Mammary epithelial cell (primary cell): ENCODE measurements at regions of chr3 and their contacts with region 1.

Region 1: GRCh38 chr3:197501879-197502620 is 53.7 kb downstream of the BDH1 start:
- DNase-seq: peak; percentile 89
- H3K4me3 ChIP-seq: peak overlapping the region in 1 of 3 experiments; percentile 7
- H3K27ac ChIP-seq: peak overlapping the region; percentile 60
- H3K4me1 ChIP-seq: peaks cover 30% of the 10 kb centered on the region
- H3K27me3 ChIP-seq: no peaks in the 10 kb centered on the region
- CTCF ChIP-seq: peak; percentile 89 to 91

Region 2: DNA sequence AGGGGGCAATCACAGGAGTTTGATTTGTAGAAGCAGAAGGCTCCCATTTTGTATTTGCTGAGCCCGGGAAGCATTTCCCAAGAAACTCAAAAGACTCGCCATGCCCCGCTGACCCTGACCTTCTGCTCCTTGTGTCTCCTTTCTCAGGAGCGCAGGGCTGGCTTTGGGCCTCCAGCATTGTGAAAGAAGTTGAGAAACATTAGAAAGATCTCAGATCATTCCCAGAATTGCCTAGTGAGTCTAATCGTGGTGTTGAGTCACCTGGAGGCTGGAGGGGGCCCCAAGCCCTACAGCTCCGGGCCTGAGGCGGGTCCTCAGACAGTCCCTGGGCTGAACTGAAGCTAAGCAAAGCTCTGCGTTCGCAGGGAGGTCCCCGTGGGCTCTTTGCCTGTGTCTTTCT is 522.5 kb before region 1 on chr3:
- CTCF ChIA-PET with region 1: no interaction called
- dilution Hi-C with region 1: no loop called
- in situ Hi-C with region 1: loop called (anchors 10 to 25 kb)
- intact Hi-C with region 1: loop called (anchors 5 kb)
- DNase-seq: no peak
- H3K4me3 ChIP-seq: no peak overlapping the region
- H3K27ac ChIP-seq: no peak overlapping the region
- H3K4me1 ChIP-seq: peaks cover 4% of the 10 kb centered on the region
- H3K27me3 ChIP-seq: no peaks in the 10 kb centered on the region
- CTCF ChIP-seq: no peak

Region 3: DNA sequence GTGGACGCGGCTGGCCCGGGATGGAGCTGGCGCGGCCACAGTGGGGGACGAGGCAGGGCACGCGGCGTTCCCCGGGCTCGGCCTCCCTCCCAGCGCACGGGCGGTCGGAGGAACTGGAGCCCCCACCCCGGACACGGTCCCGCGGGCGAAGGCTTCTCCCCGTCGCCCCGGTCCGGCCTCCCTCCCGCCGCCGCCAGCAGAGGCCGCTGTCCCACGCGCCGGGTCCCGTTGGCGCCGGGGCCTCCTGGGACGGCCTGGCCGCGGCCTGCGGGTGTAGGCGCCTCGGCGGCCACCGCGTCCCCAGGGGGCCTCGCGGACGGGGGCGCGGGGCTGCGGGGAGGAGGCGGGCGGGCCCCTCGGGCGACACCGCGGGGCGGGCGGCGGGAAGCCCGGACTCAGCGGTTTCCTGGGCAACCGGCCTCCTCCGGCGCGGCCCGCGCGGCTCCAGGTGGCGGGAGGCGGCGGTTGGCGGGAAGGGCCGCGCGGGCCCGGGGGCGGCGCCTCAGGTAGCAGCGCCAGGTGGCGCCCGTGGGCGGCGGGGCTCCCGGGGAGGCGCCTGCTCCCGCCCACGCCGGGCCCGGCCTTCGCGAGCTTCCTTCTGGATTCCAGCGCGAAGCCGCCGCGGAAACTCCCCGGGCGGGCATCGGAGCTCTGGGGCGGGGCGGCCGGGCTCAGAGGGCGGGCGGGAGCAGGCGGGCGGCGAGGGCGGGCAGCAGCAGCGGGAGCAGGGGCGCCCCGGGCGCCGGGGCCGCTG is 499.2 kb before region 1 on chr3:
- CTCF ChIA-PET with region 1: no interaction called
- dilution Hi-C with region 1: no loop called
- in situ Hi-C with region 1: loop called in 1 of 2 experiments (anchors 25 kb)
- intact Hi-C with region 1: loop called (anchors 2 kb)
- DNase-seq: peak; percentile 89
- H3K4me3 ChIP-seq: peak overlapping the region; percentile 38 to 68 (median 42)
- H3K27ac ChIP-seq: peak overlapping the region; percentile 20
- H3K4me1 ChIP-seq: peaks cover 23% of the 10 kb centered on the region
- H3K27me3 ChIP-seq: no peaks in the 10 kb centered on the region
- CTCF ChIP-seq: peak; percentile 36 to 61

Region 4: GRCh38 chr3:197256836-197257444 is 245.1 kb before region 1 on chr3:
- CTCF ChIA-PET with region 1: interaction called, 13 read pairs
- dilution Hi-C with region 1: no loop called
- in situ Hi-C with region 1: loop called (anchors 10 kb)
- intact Hi-C with region 1: loop called (anchors 1 kb)
- DNase-seq: peak; percentile 24
- H3K4me3 ChIP-seq: no peak overlapping the region
- H3K27ac ChIP-seq: peak overlapping the region; percentile 43
- H3K4me1 ChIP-seq: peaks cover 19% of the 10 kb centered on the region
- H3K27me3 ChIP-seq: no peaks in the 10 kb centered on the region
- CTCF ChIP-seq: peak; percentile 62 to 70

Region 5: DNA sequence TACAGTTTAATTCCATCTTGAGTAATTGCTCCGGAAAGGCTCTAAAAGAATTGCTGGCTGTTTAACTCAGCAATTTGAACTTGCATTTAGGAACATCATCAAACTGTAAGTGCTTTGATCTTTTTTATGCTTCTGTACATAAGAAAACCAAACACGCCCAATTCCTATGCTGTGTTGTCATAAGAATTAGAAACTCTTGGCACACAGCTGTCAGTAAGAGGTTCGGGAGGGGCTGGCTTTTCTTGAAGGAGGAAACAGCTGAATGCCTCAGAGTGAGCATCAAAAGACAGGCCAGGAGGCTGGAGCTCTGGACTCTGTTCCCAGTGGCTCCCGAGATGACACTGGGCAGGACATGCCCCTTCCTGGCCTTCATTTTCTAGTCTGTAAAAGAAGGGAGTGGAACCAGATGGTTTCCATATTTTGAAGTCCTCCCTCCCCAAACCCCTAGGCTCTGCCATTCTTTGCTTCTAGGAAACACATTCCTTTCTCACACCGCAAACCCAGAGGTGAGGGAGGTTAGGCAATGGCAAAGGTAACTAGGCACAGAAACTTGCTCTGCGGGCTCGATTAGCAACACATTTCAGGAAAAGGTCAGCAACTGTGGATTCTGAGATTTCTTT is 129.9 kb before region 1 on chr3:
- CTCF ChIA-PET with region 1: no interaction called
- dilution Hi-C with region 1: no loop called
- in situ Hi-C with region 1: no loop called
- intact Hi-C with region 1: loop called (anchors 2 kb)
- DNase-seq: peak; percentile 93
- H3K4me3 ChIP-seq: no peak overlapping the region
- H3K27ac ChIP-seq: peak overlapping the region; percentile 63
- H3K4me1 ChIP-seq: peaks cover 56% of the 10 kb centered on the region
- H3K27me3 ChIP-seq: no peaks in the 10 kb centered on the region
- CTCF ChIP-seq: no peak

Region 6: DNA sequence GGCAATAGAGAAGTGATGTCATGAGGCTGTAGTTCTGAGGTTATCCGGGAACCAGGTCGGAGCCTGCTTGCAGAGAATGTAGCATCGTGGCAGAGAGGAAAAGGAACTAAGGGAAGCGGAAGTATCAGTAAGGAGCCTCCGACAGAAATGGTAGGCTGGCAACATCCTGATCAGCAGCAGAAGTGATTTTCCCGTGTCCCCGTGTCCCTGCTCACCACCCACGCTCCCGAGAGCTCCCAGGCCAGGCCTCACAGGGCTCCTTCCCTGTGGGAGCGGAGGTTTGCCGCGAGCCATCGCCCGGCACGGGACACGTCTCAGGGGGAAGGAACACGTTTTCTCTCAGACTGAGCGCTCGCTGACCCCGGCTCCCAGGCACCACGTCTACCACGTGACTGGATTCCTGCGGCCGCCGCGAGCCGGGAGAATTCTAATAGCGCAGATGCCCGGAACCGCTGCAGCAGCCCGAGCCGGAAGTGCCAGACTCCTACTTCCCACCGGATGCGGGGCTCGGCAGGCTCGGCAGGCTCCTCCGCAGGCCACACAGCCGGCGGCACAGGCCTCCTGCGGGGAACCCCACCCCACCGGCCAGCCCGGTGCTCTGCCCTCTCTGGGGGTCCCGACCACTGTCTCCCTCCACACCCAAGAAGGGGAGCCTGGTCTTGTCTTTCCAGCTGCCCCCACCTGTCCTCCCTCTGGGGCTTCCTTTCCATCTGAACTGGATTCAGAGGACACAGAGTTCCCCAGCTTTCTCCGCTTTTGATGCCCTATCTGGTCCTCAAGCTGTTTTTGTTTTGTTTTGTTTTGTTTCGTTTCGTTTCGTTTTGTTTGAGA is 45.6 kb before region 1 on chr3:
- CTCF ChIA-PET with region 1: no interaction called
- dilution Hi-C with region 1: no loop called
- in situ Hi-C with region 1: no loop called
- intact Hi-C with region 1: loop called (anchors 1 kb)
- DNase-seq: peak; percentile 73
- H3K4me3 ChIP-seq: peak overlapping the region; percentile 22 to 47 (median 38)
- H3K27ac ChIP-seq: peak overlapping the region; percentile 23
- H3K4me1 ChIP-seq: peaks cover 11% of the 10 kb centered on the region
- H3K27me3 ChIP-seq: no peaks in the 10 kb centered on the region
- CTCF ChIP-seq: no peak